Mammary epithelial cell (primary cell): ENCODE measurements at regions of chr5 and their contacts with region 1.

Region 1: GRCh38 chr5:134411546-134412266 is at the start of gene CDKN2AIPNL:
- DNase-seq: peak; percentile 81
- H3K4me3 ChIP-seq: peak within 1 kb of the TSS; percentile 85 to 91 (median 87)
- H3K27ac ChIP-seq: peak within 1 kb of the TSS; percentile 28
- H3K4me1 ChIP-seq: peaks cover 22% of the 10 kb centered on the region
- H3K27me3 ChIP-seq: no peaks in the 10 kb centered on the region
- CTCF ChIP-seq: peak; percentile 35 to 77
- total RNA-seq, gene CDKN2AIPNL: 28.7 to 30.0 TPM

Region 2: GRCh38 chr5:134465816-134466240 is 54.1 kb after region 1 on chr5:
- CTCF ChIA-PET with region 1: no interaction called
- dilution Hi-C with region 1: no loop called
- in situ Hi-C with region 1: no loop called
- intact Hi-C with region 1: loop called (anchors 1 kb)
- DNase-seq: peak; percentile 86
- H3K4me3 ChIP-seq: peak overlapping the region in 2 of 3 experiments; percentile 20 to 36
- H3K27ac ChIP-seq: peak overlapping the region; percentile 81
- H3K4me1 ChIP-seq: peaks cover 34% of the 10 kb centered on the region
- H3K27me3 ChIP-seq: no peaks in the 10 kb centered on the region
- CTCF ChIP-seq: no peak

Region 3: GRCh38 chr5:134477462-134478250 is 66.0 kb after region 1 on chr5:
- CTCF ChIA-PET with region 1: no interaction called
- dilution Hi-C with region 1: no loop called
- in situ Hi-C with region 1: no loop called
- intact Hi-C with region 1: no loop called
- DNase-seq: peak; percentile 27
- H3K4me3 ChIP-seq: no peak overlapping the region
- H3K27ac ChIP-seq: no peak overlapping the region
- H3K4me1 ChIP-seq: no peaks in the 10 kb centered on the region
- H3K27me3 ChIP-seq: no peaks in the 10 kb centered on the region
- CTCF ChIP-seq: no peak

Region 4: DNA sequence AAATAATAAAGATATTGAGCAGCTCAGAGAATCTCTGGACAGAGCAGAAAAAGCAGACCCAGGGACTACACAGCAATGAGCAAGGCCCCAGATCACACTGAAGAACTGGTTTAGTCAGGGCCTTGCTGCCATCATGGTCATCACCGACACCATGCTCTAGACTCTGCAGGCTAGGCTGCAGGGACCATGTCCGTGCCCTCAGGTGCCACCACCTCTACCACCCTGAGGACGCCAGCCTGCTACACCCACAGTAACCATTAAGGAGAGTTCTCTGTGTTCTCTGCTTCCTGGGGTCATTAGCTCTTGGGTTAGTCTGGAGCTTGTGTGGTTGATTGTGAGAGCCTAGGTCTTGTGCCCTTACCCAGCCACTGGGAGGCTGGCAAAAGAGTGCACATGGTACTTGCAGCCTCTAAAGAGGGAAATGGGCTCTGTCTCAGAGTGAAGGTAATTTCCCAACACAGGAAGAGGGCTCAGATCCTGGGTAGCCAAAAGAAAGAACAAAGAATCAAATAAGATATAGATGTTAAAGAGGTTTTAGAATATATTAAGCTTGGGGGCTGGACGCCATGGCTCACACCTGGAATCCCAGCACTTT is 81.9 kb after region 1 on chr5:
- CTCF ChIA-PET with region 1: no interaction called
- dilution Hi-C with region 1: no loop called
- in situ Hi-C with region 1: no loop called
- intact Hi-C with region 1: no loop called
- DNase-seq: no peak
- H3K4me3 ChIP-seq: no peak overlapping the region
- H3K27ac ChIP-seq: no peak overlapping the region
- H3K4me1 ChIP-seq: no peaks in the 10 kb centered on the region
- H3K27me3 ChIP-seq: no peaks in the 10 kb centered on the region
- CTCF ChIP-seq: no peak